H1 (cell line): ENCODE measurements at regions of chr20 and their contacts with region 1.

Region 1: DNA sequence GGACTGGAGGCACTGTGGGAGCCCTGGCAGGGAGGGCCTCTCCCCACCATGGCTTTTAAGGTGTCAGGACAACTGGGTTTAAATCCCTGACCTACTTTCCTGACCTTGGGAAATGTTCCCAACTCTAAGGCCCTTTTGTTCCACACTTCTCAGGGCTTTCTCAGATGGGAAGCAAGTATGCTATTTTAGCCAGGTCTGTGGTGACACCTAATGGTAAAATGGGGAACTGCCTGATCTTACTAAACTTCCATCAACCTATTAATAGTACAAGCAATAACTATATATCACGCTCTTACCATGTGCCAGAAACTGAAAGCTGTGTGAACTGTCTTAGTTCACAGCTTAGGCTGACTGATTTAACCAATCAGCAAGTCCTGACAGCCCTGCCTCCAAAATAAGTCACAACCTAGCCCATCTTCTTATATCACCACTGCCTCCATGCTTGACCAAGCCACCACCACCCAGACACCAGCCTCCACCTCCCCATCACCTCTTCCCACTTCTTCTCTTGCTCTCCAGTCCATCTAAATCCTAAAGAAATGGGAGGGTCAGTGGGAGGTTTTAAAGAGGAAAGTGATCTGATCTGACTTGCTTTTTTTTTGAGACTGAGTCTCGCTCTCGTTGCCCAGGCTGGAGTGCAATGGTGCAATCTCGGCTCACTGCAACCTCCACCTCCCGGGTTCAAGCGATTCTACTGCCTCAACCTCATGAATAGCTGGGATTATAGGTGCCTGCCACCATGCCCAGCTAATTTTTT is 6.9 kb upstream of the BLCAP start:
- DNase-seq: peak in 1 of 2 experiments; percentile 70
- H3K4me3 ChIP-seq: no peak overlapping the region
- H3K27ac ChIP-seq: no peak overlapping the region
- H3K4me1 ChIP-seq: no peaks in the 10 kb centered on the region
- H3K27me3 ChIP-seq: no peaks in the 10 kb centered on the region
- CTCF ChIP-seq: peak in 2 of 3 experiments; percentile 78 to 90; a peak in 3 of 4 replicates
- EP300 ChIP-seq: no peak
- POLR2A ChIP-seq: no peak
- RAD21 ChIP-seq: peak; percentile 97 to 98

Region 2: DNA sequence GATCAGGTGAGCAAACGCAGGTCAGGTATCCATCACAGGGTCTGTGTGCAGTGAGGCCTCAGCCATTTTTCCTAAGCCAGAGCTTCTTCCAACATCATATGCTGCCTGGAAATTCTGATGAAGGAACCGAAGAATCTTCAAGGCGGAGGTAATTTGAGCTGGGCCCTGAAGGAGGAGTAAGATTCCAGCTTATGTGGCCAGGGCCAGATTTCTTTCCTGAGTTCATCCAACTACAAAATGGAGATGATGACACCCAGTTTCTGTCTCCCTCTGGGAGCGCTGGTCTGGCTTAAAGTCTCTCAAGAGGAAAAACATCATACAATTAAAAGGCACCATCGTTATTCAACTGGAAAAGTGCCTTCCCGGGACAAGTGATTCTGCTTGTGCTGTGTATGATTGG is 252.0 kb before region 1 on chr20:
- CTCF ChIA-PET with region 1: interaction called, 10 read pairs
- POLR2A ChIA-PET with region 1: interaction called, 3 read pairs
- DNase-seq: no peak
- H3K4me3 ChIP-seq: no peak overlapping the region
- H3K27ac ChIP-seq: no peak overlapping the region
- H3K4me1 ChIP-seq: peaks cover 0 to 16% (median 0%) of the 10 kb centered on the region in 4 experiments; a peak in 3 of 7 replicates
- H3K27me3 ChIP-seq: 0 out of 7 replicates have a peak, but pooled peaks cover 0 to 4% (median 0%) of the 10 kb centered on the region in 4 experiments
- CTCF ChIP-seq: peak in 2 of 3 experiments; percentile 41 to 56; a peak in 2 of 4 replicates
- EP300 ChIP-seq: no peak
- POLR2A ChIP-seq: no peak
- RAD21 ChIP-seq: peak; percentile 70 to 73